Common myeloid progenitor, CD34-positive (primary cell): ENCODE measurements at regions of chr14 and their contacts with region 1.

Region 1: GRCh38 chr14:94136575-94137331 is 7.3 kb upstream of the IFI27L2 start:
- DNase-seq: peak; percentile 80 to 88 (median 85)
- H3K4me3 ChIP-seq: no peak overlapping the region
- H3K27ac ChIP-seq: no peak overlapping the region
- H3K4me1 ChIP-seq: no peaks in the 10 kb centered on the region
- H3K27me3 ChIP-seq: peaks cover 0 to 2% (median 0%) of the 10 kb centered on the region in 5 experiments

Region 2: GRCh38 chr14:94026173-94026888 is 110.4 kb before region 1 on chr14 and contains the start of gene OTUB2:
- CTCF ChIA-PET with region 1: interaction called, 11 read pairs
- POLR2A ChIA-PET with region 1: no interaction called
- DNase-seq: peak; percentile 98 to 99 (median 99)
- H3K4me3 ChIP-seq: peak within 1 kb of the TSS; percentile 8 to 69 (median 42)
- H3K27ac ChIP-seq: no peak within 1 kb of the TSS
- H3K4me1 ChIP-seq: peaks cover 0 to 19% (median 14%) of the 10 kb centered on the region in 4 experiments
- H3K27me3 ChIP-seq: no peaks in the 10 kb centered on the region

Region 3: GRCh38 chr14:94036313-94037050 is 100.3 kb before region 1 on chr14:
- CTCF ChIA-PET with region 1: interaction called, 50 read pairs
- POLR2A ChIA-PET with region 1: no interaction called
- DNase-seq: peak; percentile 80 to 86 (median 80)
- H3K4me3 ChIP-seq: no peak overlapping the region
- H3K27ac ChIP-seq: no peak overlapping the region
- H3K4me1 ChIP-seq: no peaks in the 10 kb centered on the region
- H3K27me3 ChIP-seq: no peaks in the 10 kb centered on the region

Region 4: GRCh38 chr14:94051115-94051514 is 85.6 kb before region 1 on chr14:
- CTCF ChIA-PET with region 1: interaction called, 16 read pairs
- POLR2A ChIA-PET with region 1: interaction called, 4 read pairs
- DNase-seq: peak in 1 of 3 donors; percentile 5
- H3K4me3 ChIP-seq: no peak overlapping the region
- H3K27ac ChIP-seq: no peak overlapping the region
- H3K4me1 ChIP-seq: no peaks in the 10 kb centered on the region
- H3K27me3 ChIP-seq: no peaks in the 10 kb centered on the region

Region 5: GRCh38 chr14:94164685-94165431 is 28.1 kb after region 1 on chr14:
- CTCF ChIA-PET with region 1: interaction called, 33 read pairs
- POLR2A ChIA-PET with region 1: no interaction called
- DNase-seq: no peak
- H3K4me3 ChIP-seq: no peak overlapping the region
- H3K27ac ChIP-seq: no peak overlapping the region
- H3K4me1 ChIP-seq: peaks cover 8 to 42% (median 26%) of the 10 kb centered on the region in 4 experiments
- H3K27me3 ChIP-seq: peaks cover 0 to 2% (median 0%) of the 10 kb centered on the region in 5 experiments

Region 6: GRCh38 chr14:94173885-94174603 is 37.3 kb after region 1 on chr14 and contains the start of gene PPP4R4:
- CTCF ChIA-PET with region 1: interaction called, 55 read pairs
- POLR2A ChIA-PET with region 1: no interaction called
- DNase-seq: peak; percentile 90 to 95 (median 94)
- H3K4me3 ChIP-seq: peak within 1 kb of the TSS; percentile 43 to 80 (median 66)
- H3K27ac ChIP-seq: no peak within 1 kb of the TSS
- H3K4me1 ChIP-seq: peaks cover 0 to 20% (median 11%) of the 10 kb centered on the region in 4 experiments
- H3K27me3 ChIP-seq: peaks cover 20 to 51% (median 38%) of the 10 kb centered on the region in 5 experiments

Region 7: DNA sequence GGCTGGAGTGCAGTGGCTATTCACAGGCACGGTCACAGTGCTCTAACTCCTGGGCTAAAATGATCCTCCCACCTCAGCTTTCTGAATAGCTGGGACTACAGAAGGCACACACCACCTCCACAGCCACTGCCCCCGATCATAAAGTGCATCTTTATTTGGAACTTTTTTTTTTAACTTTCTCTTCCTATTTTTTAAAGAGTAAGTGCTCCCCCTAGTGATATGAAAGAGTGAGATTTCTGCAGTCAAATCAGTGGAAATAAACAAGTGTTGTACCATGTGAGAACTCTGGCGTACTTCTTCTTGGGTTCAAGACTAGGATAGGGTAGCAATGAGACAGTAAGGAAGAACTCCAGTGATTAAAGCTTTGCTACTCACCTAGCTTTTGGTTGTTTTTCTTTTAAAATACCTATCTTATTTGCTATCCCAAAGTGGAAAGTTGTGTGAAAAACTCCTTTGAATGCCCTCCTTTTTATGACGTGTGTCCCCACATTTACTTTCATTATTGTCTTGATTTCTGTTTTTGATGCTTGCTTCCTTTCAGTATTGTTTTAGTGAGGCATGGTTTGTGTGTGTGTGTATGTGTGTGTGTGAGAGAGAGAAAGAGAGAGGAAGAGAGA is 44.0 kb after region 1 on chr14:
- CTCF ChIA-PET with region 1: interaction called, 55 read pairs
- POLR2A ChIA-PET with region 1: no interaction called
- DNase-seq: peak; percentile 60 to 81 (median 80)
- H3K4me3 ChIP-seq: peak overlapping the region in 3 of 7 experiments; percentile 27 to 73 (median 29)
- H3K27ac ChIP-seq: no peak overlapping the region
- H3K4me1 ChIP-seq: no peaks in the 10 kb centered on the region
- H3K27me3 ChIP-seq: peaks cover 10 to 38% (median 18%) of the 10 kb centered on the region in 5 experiments

Region 8: GRCh38 chr14:94203473-94204210 is 66.9 kb after region 1 on chr14:
- CTCF ChIA-PET with region 1: no interaction called
- POLR2A ChIA-PET with region 1: no interaction called
- DNase-seq: no peak
- H3K4me3 ChIP-seq: no peak overlapping the region
- H3K27ac ChIP-seq: no peak overlapping the region
- H3K4me1 ChIP-seq: no peaks in the 10 kb centered on the region
- H3K27me3 ChIP-seq: peaks cover 0 to 4% (median 0%) of the 10 kb centered on the region in 5 experiments